Naive thymus-derived CD4-positive, alpha-beta T cell (primary cell): ENCODE measurements at regions of chr13 and their contacts with region 1.

Region 1: DNA sequence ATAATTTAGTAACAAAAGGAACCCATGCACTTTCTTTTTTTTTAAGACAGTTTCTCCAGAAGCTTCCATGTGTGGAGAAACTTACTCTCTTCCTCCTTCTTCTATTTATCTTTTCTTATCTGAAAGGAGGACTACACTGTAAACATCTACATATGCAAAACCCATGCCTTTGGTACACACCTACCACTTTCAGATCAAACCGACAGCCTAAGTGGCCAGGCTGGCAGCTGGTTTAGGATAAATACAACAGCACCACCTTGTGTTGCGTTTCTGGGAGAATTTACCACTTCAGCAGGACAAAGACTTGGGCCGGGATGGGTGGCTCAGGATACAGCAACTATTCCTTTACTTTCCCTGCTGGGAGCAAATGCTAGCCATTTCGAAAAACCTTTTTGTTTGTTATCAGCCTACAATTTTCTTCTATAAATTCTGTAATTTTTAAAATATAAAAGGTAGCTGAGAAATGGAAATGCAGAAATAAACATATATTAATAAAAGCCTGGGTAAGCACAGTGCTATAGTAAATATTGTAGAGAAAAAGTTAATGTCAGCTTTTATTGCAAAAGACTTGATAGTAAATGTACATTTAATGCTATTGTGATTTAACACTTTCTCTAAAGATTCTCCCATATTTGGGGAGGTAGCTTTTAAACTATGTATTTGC is 94.0 kb upstream of the RFC3 start:
- DNase-seq: peak in 8 of 9 donors; percentile 37 to 68 (median 58)
- ATAC-seq: peak; percentile 93
- H3K4me3 ChIP-seq: no peak overlapping the region
- H3K4me3 Mint-ChIP-seq: peak overlapping the region in 5 of 10 donors; percentile 5 to 65 (median 26)
- H3K27ac ChIP-seq: no peak overlapping the region
- H3K27ac Mint-ChIP-seq: peak overlapping the region in 4 of 9 donors; percentile 6 to 84 (median 27)
- H3K4me1 ChIP-seq: peaks cover 0 to 14% of the 10 kb centered on the region in 2 donors
- H3K4me1 Mint-ChIP-seq: peaks cover 2 to 33% (median 20%) of the 10 kb centered on the region in 7 donors
- H3K27me3 ChIP-seq: no peaks in the 10 kb centered on the region
- H3K27me3 Mint-ChIP-seq: no peaks in the 10 kb centered on the region

Region 2: DNA sequence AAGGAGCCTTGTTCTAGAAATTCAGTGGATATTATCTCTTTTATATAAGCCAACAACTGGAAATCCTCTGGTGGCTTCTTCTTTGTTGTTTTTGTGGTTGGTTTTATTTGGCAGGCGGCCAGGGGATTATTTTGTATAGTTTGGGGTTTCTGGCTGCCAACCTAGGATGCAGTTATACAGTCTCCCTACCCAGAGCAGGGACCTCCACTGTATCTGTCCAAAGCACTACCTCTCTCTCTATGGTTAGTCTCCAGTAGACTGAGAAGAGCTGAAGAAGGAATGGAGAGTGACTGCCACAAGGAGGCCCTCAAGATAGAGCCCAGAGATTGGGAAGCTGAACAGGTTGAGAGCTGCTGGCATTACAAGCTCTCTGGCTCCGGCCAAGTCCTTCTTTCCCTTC is 1489.0 kb before region 1 on chr13:
- CTCF ChIA-PET with region 1: no interaction called
- POLR2A ChIA-PET with region 1: no interaction called
- intact Hi-C with region 1: no loop called
- DNase-seq: peak in 4 of 9 donors; percentile 3 to 19 (median 9)
- ATAC-seq: no peak
- H3K4me3 ChIP-seq: no peak overlapping the region
- H3K4me3 Mint-ChIP-seq: no peak overlapping the region
- H3K27ac ChIP-seq: no peak overlapping the region
- H3K27ac Mint-ChIP-seq: peak overlapping the region in 1 of 9 donors; percentile 32
- H3K4me1 ChIP-seq: no peaks in the 10 kb centered on the region
- H3K4me1 Mint-ChIP-seq: peaks cover 0 to 15% (median 5%) of the 10 kb centered on the region in 7 donors
- H3K27me3 ChIP-seq: no peaks in the 10 kb centered on the region
- H3K27me3 Mint-ChIP-seq: no peaks in the 10 kb centered on the region

Region 3: DNA sequence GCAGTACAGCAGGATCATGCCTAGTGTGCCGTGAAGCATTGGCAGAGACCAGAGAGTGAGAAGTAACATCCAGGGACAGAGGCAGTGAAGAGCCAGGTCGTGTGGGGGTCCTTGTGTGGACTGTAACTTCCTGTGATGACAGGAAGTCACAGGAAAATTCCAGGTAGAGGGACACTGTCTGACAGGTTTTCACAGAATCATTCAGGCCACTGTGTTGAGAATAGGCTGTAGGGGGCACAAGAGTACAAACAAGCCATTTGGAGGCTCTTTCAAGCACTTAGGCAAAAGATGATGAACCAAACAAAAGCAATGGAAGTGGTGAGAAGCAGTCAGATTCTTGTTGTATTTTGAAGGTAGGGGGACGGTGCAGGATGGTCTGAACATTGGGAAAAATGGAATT is 1342.4 kb before region 1 on chr13:
- CTCF ChIA-PET with region 1: no interaction called
- POLR2A ChIA-PET with region 1: no interaction called
- intact Hi-C with region 1: loop called in 1 of 2 experiments (anchors 5 kb)
- DNase-seq: peak in 6 of 9 donors; percentile 5 to 41 (median 24)
- ATAC-seq: peak; percentile 73
- H3K4me3 ChIP-seq: no peak overlapping the region
- H3K4me3 Mint-ChIP-seq: no peak overlapping the region
- H3K27ac ChIP-seq: no peak overlapping the region
- H3K27ac Mint-ChIP-seq: no peak overlapping the region
- H3K4me1 ChIP-seq: no peaks in the 10 kb centered on the region
- H3K4me1 Mint-ChIP-seq: peaks cover 0 to under 1% (median 0%) of the 10 kb centered on the region in 7 donors
- H3K27me3 ChIP-seq: no peaks in the 10 kb centered on the region
- H3K27me3 Mint-ChIP-seq: no peaks in the 10 kb centered on the region

Region 4: DNA sequence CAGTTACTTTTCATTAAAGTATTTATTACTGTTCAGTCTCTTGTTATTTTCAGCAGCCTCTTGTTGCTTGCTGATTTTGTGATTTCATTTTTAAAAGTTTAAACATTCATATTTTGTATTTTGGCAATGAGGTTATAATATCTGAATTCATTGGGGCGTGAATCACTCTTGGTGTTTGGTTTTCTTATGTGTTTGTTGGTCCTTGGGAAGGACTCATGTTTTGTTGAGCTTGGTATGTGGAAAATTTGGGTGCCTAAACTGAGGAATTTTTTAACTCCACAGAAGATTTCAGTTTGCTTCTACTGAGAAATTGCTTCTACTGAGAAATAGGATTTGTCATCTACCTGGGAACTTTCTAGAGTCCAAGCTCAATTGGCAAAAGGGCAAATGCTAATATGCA is 1099.5 kb before region 1 on chr13:
- CTCF ChIA-PET with region 1: no interaction called
- POLR2A ChIA-PET with region 1: no interaction called
- intact Hi-C with region 1: no loop called
- DNase-seq: no peak
- ATAC-seq: no peak
- H3K4me3 ChIP-seq: no peak overlapping the region
- H3K4me3 Mint-ChIP-seq: peak overlapping the region in 2 of 10 donors; percentile 32 to 34
- H3K27ac ChIP-seq: no peak overlapping the region
- H3K27ac Mint-ChIP-seq: no peak overlapping the region
- H3K4me1 ChIP-seq: no peaks in the 10 kb centered on the region
- H3K4me1 Mint-ChIP-seq: peaks cover 14 to 67% (median 49%) of the 10 kb centered on the region in 7 donors
- H3K27me3 ChIP-seq: no peaks in the 10 kb centered on the region
- H3K27me3 Mint-ChIP-seq: no peaks in the 10 kb centered on the region

Region 5: GRCh38 chr13:33017323-33017929 is 706.5 kb before region 1 on chr13:
- CTCF ChIA-PET with region 1: no interaction called
- POLR2A ChIA-PET with region 1: no interaction called
- intact Hi-C with region 1: loop called in 1 of 2 experiments (anchors 5 kb)
- DNase-seq: peak in 6 of 9 donors; percentile 6 to 47 (median 18)
- ATAC-seq: peak; percentile 80
- H3K4me3 ChIP-seq: peak overlapping the region; percentile 30
- H3K4me3 Mint-ChIP-seq: peak overlapping the region; percentile 37 to 81 (median 73)
- H3K27ac ChIP-seq: no peak overlapping the region
- H3K27ac Mint-ChIP-seq: peak overlapping the region in 2 of 9 donors; percentile 49 to 66
- H3K4me1 ChIP-seq: peaks cover 3 to 7% of the 10 kb centered on the region in 2 donors
- H3K4me1 Mint-ChIP-seq: peaks cover 10 to 21% (median 15%) of the 10 kb centered on the region in 7 donors
- H3K27me3 ChIP-seq: peaks cover 4 to 7% of the 10 kb centered on the region in 2 donors
- H3K27me3 Mint-ChIP-seq: peaks cover 65 to 83% (median 71%) of the 10 kb centered on the region in 5 donors

Region 6: GRCh38 chr13:33610471-33611015 is 113.4 kb before region 1 on chr13:
- CTCF ChIA-PET with region 1: no interaction called
- POLR2A ChIA-PET with region 1: no interaction called
- intact Hi-C with region 1: loop called in 1 of 2 experiments (anchors 2 kb)
- DNase-seq: peak in 5 of 9 donors; percentile 1 to 53 (median 6)
- ATAC-seq: peak; percentile 75
- H3K4me3 ChIP-seq: peak overlapping the region; percentile 14
- H3K4me3 Mint-ChIP-seq: peak overlapping the region; percentile 6 to 84 (median 67)
- H3K27ac ChIP-seq: no peak overlapping the region
- H3K27ac Mint-ChIP-seq: peak overlapping the region in 8 of 9 donors; percentile 34 to 90 (median 70)
- H3K4me1 ChIP-seq: peaks cover 7 to 8% of the 10 kb centered on the region in 2 donors
- H3K4me1 Mint-ChIP-seq: peaks cover 12 to 35% (median 29%) of the 10 kb centered on the region in 7 donors
- H3K27me3 ChIP-seq: no peaks in the 10 kb centered on the region
- H3K27me3 Mint-ChIP-seq: peaks cover 0 to 12% (median 5%) of the 10 kb centered on the region in 5 donors

Region 7: DNA sequence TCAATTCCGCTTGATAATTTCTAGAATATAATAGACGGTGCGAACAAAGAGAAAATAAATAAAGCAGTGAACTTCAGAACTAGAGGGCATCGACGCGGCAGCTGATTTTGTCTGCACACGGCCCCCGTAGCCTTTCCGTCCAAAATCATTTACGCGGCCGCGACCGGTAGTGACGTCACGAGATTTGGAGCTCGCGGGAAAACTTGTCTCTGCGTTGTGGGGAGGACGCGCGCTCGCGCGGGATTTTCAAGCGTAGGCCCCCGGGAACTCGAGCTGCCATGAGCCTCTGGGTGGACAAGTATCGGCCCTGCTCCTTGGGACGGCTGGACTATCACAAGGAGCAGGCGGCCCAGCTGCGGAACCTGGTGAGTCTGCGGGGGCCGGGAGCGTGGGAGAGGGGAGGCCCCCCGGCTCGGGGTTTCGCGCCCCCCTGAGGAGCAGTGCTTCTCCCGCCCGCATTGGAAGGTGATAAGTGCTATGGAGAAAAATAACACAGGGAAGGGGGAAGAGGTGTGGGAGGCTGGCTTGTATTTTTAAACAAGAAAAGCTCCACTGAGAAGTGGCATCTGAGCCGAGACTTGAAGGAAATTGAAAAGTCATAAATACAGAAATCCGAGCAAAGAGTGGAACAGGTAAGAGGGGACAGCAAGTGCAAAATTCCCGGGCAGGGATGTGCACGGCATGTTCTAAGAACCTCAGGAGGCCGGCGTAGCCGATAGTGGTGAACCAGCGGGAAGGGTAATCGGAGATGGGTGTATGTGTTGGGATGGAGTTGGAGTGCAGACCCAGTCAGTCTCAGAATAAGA is 94.2 kb after region 1 on chr13 and contains the start of gene RFC3:
- CTCF ChIA-PET with region 1: no interaction called
- POLR2A ChIA-PET with region 1: no interaction called
- intact Hi-C with region 1: loop called (anchors 2 to 5 kb)
- DNase-seq: peak; percentile 78 to 89 (median 87)
- ATAC-seq: peak; percentile 95
- H3K4me3 ChIP-seq: peak within 1 kb of the TSS; percentile 84
- H3K4me3 Mint-ChIP-seq: peak within 1 kb of the TSS; percentile 86 to 100 (median 96)
- H3K27ac ChIP-seq: peak within 1 kb of the TSS; percentile 70
- H3K27ac Mint-ChIP-seq: peak within 1 kb of the TSS; percentile 89 to 98 (median 95)
- H3K4me1 ChIP-seq: peaks cover 0 to 8% of the 10 kb centered on the region in 2 donors
- H3K4me1 Mint-ChIP-seq: peaks cover 14 to 44% (median 25%) of the 10 kb centered on the region in 7 donors
- H3K27me3 ChIP-seq: no peaks in the 10 kb centered on the region
- H3K27me3 Mint-ChIP-seq: peaks cover 0 to 7% (median 0%) of the 10 kb centered on the region in 5 donors
- total RNA-seq, gene RFC3: 4.5 to 29.9 (median 7.1) TPM

Region 8: DNA sequence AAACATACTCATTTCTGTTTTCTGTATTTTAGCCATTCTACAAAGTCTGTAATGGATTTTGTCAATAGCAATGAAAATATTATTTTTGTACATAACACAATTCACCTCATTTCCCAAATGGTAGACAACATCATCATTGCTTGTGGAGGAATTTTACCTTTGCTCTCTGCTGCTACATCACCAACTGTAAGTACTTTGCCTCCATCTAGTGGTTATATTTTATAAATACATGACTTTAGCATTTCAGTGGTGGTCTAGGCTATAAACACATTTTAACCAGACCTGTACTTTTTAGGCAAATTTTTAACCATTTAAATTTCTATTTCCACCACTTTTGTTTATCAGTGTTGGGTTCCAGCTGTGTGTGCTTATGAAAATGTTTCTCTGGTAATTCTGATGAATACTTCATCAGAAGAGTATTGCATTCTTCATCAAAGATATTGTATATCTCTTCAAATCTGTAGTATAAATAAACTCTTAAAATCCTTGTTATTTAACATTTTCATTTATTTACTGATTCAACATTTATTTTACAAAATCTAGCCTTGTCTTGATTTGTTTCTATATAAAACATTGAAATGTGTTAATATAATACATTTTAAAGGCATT is 1440.5 kb after region 1 on chr13:
- CTCF ChIA-PET with region 1: no interaction called
- POLR2A ChIA-PET with region 1: no interaction called
- intact Hi-C with region 1: loop called in 1 of 2 experiments (anchors 10 kb)
- DNase-seq: peak in 6 of 9 donors; percentile 13 to 50 (median 35)
- ATAC-seq: peak; percentile 64
- H3K4me3 ChIP-seq: no peak overlapping the region
- H3K4me3 Mint-ChIP-seq: no peak overlapping the region
- H3K27ac ChIP-seq: no peak overlapping the region
- H3K27ac Mint-ChIP-seq: no peak overlapping the region
- H3K4me1 ChIP-seq: no peaks in the 10 kb centered on the region
- H3K4me1 Mint-ChIP-seq: peaks cover 5 to 13% (median 9%) of the 10 kb centered on the region in 7 donors
- H3K27me3 ChIP-seq: no peaks in the 10 kb centered on the region
- H3K27me3 Mint-ChIP-seq: no peaks in the 10 kb centered on the region